Astrocyte of the cerebellum (primary cell): ENCODE measurements at regions of chr18 and their contacts with region 1.

Region 1: GRCh38 chr18:11149441-11150270 is at the start of gene PIEZO2:
- DNase-seq: peak; percentile 16
- H3K4me3 ChIP-seq: peak within 1 kb of the TSS; percentile 45
- CTCF ChIP-seq: no peak

Region 2: GRCh38 chr18:10851824-10852319 is 297.8 kb before region 1 on chr18:
- in situ Hi-C with region 1: loop called (anchors 5 kb)
- DNase-seq: peak; percentile 60
- H3K4me3 ChIP-seq: no peak overlapping the region
- CTCF ChIP-seq: peak; percentile 54

Region 3: GRCh38 chr18:11047156-11047555 is 102.5 kb before region 1 on chr18:
- in situ Hi-C with region 1: loop called (anchors 5 kb)
- DNase-seq: no peak
- H3K4me3 ChIP-seq: no peak overlapping the region
- CTCF ChIP-seq: no peak